Dorsolateral prefrontal cortex (tissue), 120 donors: ENCODE measurements at regions of chr10 and their contacts with region 1.

Region 1: DNA sequence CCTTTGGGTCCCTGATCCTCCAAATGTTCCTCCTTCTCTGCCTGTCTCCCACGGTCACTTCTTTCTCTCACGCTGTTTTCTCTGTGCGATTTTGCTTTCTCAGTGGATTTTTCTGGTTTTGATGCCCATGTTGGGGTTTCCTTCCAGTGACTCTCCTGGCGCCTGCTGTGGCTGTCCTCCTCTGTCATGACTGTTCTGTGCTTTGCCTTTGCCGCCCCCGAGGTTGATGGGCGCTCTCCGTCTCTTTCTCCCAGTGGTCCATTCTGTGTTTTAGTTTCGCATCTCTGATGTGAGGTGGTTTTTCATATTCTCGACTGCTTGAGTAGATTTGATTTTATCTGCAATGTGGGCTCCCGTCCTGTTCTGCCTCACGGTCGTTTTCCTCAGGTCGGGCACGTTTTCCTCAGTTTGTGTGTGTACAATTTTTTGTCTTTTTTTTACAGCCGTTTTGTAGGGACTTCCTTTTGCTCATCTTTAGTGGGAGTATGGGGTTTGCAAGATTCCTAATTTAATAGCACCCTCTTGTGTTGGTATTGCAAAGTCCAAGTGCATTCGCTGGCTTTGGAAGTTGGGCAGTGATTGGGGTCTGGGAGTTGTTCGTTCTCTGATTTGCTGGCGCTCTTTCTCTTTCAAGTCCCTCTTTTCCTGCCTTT is 100.0 kb downstream of the INPP5A start:
- DNase-seq: peak in 6 of 10 donors; percentile 27 to 54 (median 38)
- H3K4me3 ChIP-seq: peak overlapping the region in 58 of 59 donors; percentile 3 to 67 (median 44)
- H3K27ac ChIP-seq: peak overlapping the region in 58 of 59 donors; percentile 0 to 90 (median 78)
- H3K27me3 ChIP-seq: no peaks in the 10 kb centered on the region
- CTCF ChIP-seq: peak; percentile 64 to 94 (median 84)

Region 2: GRCh38 chr10:132223156-132223590 is 414.4 kb before region 1 on chr10:
- intact Hi-C with region 1: loop called in 1 of 2 experiments (anchors 5 kb)
- DNase-seq: peak; percentile 76 to 91 (median 86)
- H3K4me3 ChIP-seq: no peak overlapping the region
- H3K27ac ChIP-seq: peak overlapping the region in 1 of 59 donors; percentile 15
- H3K27me3 ChIP-seq: no peaks in the 10 kb centered on the region
- CTCF ChIP-seq: peak; percentile 66 to 99 (median 94)

Region 3: GRCh38 chr10:132387764-132388210 is 249.8 kb before region 1 on chr10:
- intact Hi-C with region 1: loop called (anchors 5 to 10 kb)
- DNase-seq: peak in 4 of 10 donors; percentile 20 to 57 (median 49)
- H3K4me3 ChIP-seq: peak overlapping the region in 1 of 59 donors; percentile 30
- H3K27ac ChIP-seq: peak overlapping the region in 7 of 59 donors; percentile 15 to 64 (median 28)
- H3K27me3 ChIP-seq: no peaks in the 10 kb centered on the region
- CTCF ChIP-seq: peak; percentile 19 to 76 (median 58)

Region 4: GRCh38 chr10:132396495-132397035 is 241.0 kb before region 1 on chr10:
- intact Hi-C with region 1: loop called in 1 of 2 experiments (anchors 10 kb)
- DNase-seq: peak in 1 of 10 donors; percentile 37
- H3K4me3 ChIP-seq: peak overlapping the region; percentile 25 to 85 (median 61)
- H3K27ac ChIP-seq: peak overlapping the region in 57 of 59 donors; percentile 29 to 95 (median 84)
- H3K27me3 ChIP-seq: no peaks in the 10 kb centered on the region
- CTCF ChIP-seq: peak in 8 of 56 donors; percentile 11 to 39 (median 20)

Region 5: DNA sequence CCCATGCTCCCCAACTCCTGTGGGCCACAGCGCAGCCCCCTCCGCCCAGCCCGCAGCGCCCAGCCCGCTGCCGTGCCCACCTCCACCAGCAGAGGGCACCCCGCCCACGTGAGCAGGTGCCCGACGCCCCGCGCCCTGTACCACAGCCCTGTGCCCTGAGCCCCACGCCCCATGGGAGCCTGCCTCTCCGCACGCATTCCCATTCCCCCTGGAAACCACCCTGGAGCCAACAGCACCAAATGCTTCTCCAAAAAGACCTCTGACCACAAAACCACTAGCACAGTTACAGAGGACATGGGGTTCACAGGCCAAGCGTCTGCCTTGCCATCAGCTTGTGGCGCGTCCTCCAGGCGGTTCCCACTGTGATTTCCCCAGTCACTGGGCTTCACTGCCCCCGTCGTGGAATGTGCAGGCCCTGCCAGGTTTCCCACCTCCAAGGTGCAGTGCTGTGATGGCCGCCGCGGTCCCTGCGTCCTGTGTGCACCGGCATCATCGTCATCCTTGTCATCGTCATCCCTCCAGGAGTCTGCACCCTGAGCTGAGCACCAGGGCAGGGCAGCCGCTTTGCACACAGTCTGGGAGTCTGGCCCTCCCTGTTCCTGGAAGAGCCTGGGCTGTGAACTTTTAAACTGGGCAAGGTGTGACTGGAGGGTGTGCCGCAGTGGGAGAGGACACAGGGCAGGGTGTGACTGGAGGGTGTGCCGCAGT is 178.9 kb before region 1 on chr10:
- intact Hi-C with region 1: loop called (anchors 2 kb)
- DNase-seq: peak in 7 of 10 donors; percentile 45 to 78 (median 62)
- H3K4me3 ChIP-seq: peak overlapping the region in 1 of 59 donors; percentile 14
- H3K27ac ChIP-seq: no peak overlapping the region
- H3K27me3 ChIP-seq: no peaks in the 10 kb centered on the region
- CTCF ChIP-seq: peak; percentile 59 to 99 (median 94)

Region 6: DNA sequence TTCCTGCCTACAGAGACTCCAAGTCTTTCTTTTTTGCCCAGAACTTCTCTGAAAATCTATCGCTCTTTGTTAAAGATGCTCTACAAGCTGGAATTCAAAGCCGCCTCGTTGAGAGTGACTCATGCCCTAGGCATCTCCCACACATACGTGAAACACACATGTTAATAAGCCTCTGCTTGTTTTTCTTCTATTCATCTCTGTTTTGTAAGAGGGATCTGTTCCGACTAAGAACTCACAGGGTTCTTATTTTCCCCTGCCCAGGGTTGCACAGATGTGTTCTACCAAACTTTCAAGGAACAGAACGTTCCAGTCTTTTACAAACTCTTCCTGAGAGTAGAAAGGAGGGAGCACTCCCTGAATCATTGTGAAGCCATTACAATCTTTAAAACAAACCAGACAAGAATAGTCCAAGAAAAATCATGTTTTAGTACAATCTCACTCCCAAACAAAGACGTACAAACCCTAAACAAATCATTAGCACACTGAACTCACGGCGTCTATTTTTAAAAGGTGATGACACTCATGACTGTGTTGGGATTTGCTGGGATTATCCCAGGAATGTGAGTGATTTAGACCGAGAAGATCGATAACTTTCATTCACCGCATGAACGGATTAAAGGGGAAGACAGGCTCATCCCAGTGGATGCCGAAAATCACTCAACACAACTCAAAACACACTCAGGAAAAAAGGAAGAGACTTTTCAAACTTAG is 155.4 kb before region 1 on chr10:
- intact Hi-C with region 1: no loop called
- DNase-seq: peak in 4 of 10 donors; percentile 15 to 49 (median 36)
- H3K4me3 ChIP-seq: no peak overlapping the region
- H3K27ac ChIP-seq: peak overlapping the region in 19 of 59 donors; percentile 3 to 78 (median 44)
- H3K27me3 ChIP-seq: peaks cover 0 to 12% (median 0%) of the 10 kb centered on the region in 45 donors
- CTCF ChIP-seq: no peak

Region 7: GRCh38 chr10:132536971-132537712 is 100.5 kb before region 1 on chr10:
- intact Hi-C with region 1: loop called (anchors 2 kb)
- DNase-seq: peak; percentile 100
- H3K4me3 ChIP-seq: peak overlapping the region; percentile 60 to 93 (median 81)
- H3K27ac ChIP-seq: peak overlapping the region; percentile 9 to 96 (median 89)
- H3K27me3 ChIP-seq: no peaks in the 10 kb centered on the region
- CTCF ChIP-seq: peak in 48 of 56 donors; percentile 16 to 79 (median 46)

Region 8: DNA sequence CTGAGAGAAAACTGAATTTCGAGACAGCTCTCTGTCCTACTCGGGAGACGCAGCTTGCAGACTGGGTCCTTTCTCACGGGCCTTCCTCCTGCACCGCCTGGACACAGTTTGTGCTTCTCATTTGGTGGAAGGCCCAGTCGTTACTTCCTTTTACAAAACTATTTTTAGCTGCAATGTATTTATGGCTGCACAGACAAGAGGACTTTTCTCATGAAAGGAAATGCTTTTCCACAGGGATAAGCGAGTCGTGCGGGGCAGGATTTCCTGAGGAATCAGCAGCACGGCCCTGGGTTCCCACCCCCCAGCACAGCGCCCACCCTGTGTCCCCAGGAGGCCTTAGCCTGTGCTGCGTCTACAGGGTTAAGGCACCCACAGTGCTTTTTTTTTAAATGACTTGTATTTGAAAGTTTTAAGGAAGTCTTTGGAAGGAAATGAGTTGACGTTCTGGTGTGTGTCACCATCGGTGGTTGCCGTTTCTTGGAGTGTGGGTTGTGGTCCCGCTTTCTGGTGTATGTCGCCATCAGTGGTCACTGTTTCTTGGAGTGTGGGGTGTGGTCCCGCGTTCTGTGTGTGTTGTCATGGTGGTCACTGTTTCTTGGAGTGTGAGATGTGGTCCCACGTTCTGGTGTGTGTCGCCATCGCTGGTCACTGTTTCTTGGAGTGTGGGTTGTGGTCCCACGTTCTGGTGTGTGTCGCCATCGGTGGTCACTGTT is 49.1 kb before region 1 on chr10:
- intact Hi-C with region 1: loop called in 1 of 2 experiments (anchors 5 kb)
- DNase-seq: no peak
- H3K4me3 ChIP-seq: peak overlapping the region in 14 of 59 donors; percentile 3 to 29 (median 15)
- H3K27ac ChIP-seq: peak overlapping the region in 46 of 59 donors; percentile 8 to 79 (median 54)
- H3K27me3 ChIP-seq: no peaks in the 10 kb centered on the region
- CTCF ChIP-seq: no peak